CD8-positive, alpha-beta memory T cell (primary cell): ENCODE measurements at regions of chr1 and their contacts with region 1.

Region 1: DNA sequence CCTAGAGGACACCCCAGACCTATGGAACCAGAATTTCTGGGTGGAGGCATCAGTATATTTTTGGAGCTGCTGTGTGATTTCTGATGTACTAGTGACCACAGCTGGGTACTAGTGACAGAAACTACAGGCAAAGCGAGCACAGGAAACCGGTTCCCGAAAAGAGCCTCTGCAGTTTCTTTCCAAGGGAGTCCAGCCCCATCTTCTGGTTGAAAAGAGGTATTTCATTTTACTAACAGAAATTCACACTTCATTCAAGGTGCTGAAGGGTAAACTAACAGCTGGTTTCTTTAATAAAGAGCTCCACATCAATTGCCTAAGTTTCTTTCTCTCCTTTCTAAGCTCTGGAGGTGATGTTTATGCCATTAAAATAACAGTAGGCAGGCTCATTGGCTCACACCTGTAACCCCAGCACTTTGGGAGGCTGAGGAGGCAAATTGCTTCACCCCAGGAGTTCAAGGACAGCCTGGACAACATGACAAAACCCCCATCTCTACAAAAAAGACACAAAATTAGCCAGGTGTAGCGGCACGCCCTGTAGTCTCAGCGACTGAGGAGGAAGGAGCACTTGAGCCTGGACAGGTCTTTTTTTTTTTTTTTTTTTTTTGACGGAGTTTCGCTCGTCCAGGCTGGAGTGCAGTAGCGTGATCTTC is 22.0 kb downstream of the THAP3 start:
- DNase-seq: peak in 2 of 5 donors; percentile 30 to 49
- H3K4me3 ChIP-seq: no peak overlapping the region
- H3K4me3 Mint-ChIP-seq: no peak overlapping the region
- H3K27ac ChIP-seq: no peak overlapping the region
- H3K27ac Mint-ChIP-seq: peak overlapping the region in 1 of 8 donors; percentile 29
- H3K4me1 ChIP-seq: no peaks in the 10 kb centered on the region
- H3K4me1 Mint-ChIP-seq: no peaks in the 10 kb centered on the region
- H3K27me3 ChIP-seq: no peaks in the 10 kb centered on the region
- H3K27me3 Mint-ChIP-seq: no peaks in the 10 kb centered on the region

Region 2: DNA sequence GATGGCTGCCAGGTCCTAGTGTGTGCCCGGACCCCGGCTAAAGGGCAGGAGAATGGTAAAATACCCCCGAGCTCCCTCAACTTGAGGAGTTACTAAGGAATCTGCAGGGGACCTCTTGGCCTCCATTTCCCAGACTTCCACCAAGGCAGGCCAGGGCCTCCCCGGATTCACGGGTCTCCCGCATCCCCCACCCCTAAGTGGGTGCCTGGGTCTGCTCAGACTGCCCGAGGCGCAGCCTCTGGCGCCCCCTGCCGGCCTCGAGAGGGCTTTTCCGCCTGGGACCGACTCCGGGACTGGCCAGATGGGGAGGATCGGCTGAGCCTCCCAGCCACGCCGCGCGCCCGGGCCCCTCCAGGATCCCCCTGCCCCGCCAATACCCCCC is 156.8 kb before region 1 on chr1:
- CTCF ChIA-PET with region 1: interaction called, 79 read pairs
- POLR2A ChIA-PET with region 1: interaction called, 3 read pairs
- DNase-seq: peak; percentile 67 to 82 (median 70)
- H3K4me3 ChIP-seq: peak overlapping the region; percentile 78
- H3K4me3 Mint-ChIP-seq: peak overlapping the region; percentile 68 to 89 (median 80)
- H3K27ac ChIP-seq: peak overlapping the region; percentile 43
- H3K27ac Mint-ChIP-seq: peak overlapping the region in 3 of 8 donors; percentile 17 to 24 (median 24)
- H3K4me1 ChIP-seq: peaks cover 23% of the 10 kb centered on the region
- H3K4me1 Mint-ChIP-seq: peaks cover 14 to 27% (median 18%) of the 10 kb centered on the region in 3 donors
- H3K27me3 ChIP-seq: peaks cover 16% of the 10 kb centered on the region
- H3K27me3 Mint-ChIP-seq: peaks cover 11 to 23% of the 10 kb centered on the region in 2 donors